Right ventricle myocardium superior (tissue), 1 donor: ENCODE measurements at regions of chr11 and their contacts with region 1.

Region 1: GRCh38 chr11:1309498-1310317 is at the start of gene TOLLIP:
- DNase-seq: peak; percentile 98
- ATAC-seq: peak; percentile 97
- total RNA-seq, gene TOLLIP: 49.9 TPM

Region 2: DNA sequence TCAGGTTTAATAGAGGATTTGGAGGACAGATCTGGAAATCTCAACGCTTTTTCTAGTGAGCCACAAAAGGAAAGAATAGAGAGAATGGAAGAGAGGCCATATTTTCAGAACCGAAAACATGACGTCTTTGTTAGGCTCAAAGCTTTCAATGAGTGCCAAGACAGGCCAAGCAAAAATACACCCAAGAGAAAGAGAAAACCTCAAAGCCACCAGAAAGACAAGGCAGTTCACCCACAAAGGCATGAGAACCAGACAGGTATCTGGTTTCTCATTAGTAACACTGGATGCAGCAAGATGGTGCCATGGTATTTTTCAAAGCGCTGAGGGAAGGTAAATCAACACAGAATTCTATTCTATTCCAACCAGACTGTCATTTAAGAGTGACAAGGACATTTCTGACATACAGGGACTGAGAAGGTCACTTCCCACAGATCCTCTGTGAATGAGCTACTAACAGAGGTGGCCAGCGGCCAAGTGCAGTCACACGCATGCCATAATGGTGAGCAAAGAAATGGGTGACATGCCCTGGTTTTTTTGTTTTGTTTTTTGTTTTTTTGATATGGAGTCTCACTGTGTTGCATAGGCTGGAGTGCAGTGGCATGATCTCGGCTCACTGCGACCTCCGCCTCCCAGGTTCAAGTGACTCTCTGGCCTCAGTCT is 42.1 kb before region 1 on chr11:
- intact Hi-C with region 1: loop called (anchors 5 kb)
- DNase-seq: peak; percentile 64
- ATAC-seq: peak; percentile 64

Region 3: GRCh38 chr11:1532014-1532586 is 222.4 kb after region 1 on chr11:
- intact Hi-C with region 1: loop called (anchors 10 kb)
- DNase-seq: peak; percentile 86
- ATAC-seq: peak; percentile 92